Breast epithelium (tissue), 4 donors: ENCODE measurements at regions of chr18 and their contacts with region 1.

Region 1: DNA sequence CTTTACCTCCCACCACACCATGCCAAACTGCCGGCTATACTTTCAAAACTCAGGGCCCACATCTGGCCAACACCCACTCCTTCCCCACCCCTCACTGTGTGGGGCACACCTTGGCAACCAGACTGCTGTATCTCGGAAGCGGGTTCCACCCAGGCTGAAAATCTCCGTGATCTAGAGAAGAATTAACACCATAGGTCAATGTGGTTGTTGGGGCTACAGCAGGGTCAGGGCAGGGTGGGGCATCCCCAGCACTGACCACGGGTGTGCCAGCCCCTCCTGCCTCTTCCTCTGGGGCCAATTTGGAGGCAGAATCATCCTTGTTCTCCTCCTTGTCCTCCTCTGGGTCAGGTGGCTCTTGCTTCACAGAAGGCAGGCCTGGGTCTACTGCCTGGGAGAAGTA is 6.3 kb upstream of the CFAP53 start:
- DNase-seq: no peak
- H3K4me3 ChIP-seq: no peak overlapping the region
- H3K27ac ChIP-seq: no peak overlapping the region
- H3K4me1 ChIP-seq: peaks cover 0 to 2% of the 10 kb centered on the region in 2 donors
- H3K27me3 ChIP-seq: no peaks in the 10 kb centered on the region
- CTCF ChIP-seq: no peak
- POLR2A ChIP-seq: no peak

Region 2: GRCh38 chr18:50247561-50247960 is 25.0 kb before region 1 on chr18:
- intact Hi-C with region 1: loop called (anchors 1 kb)
- DNase-seq: no peak
- H3K4me3 ChIP-seq: no peak overlapping the region
- H3K27ac ChIP-seq: no peak overlapping the region
- H3K4me1 ChIP-seq: no peaks in the 10 kb centered on the region
- H3K27me3 ChIP-seq: no peaks in the 10 kb centered on the region
- CTCF ChIP-seq: no peak
- POLR2A ChIP-seq: no peak